OCI-LY7 (cell line): ENCODE measurements at regions of chr1 and their contacts with region 1.

Region 1: GRCh38 chr1:65209005-65209885 is 61.2 kb downstream of the AK4 start:
- DNase-seq: peak; percentile 36
- H3K4me3 ChIP-seq: no peak overlapping the region
- H3K27ac ChIP-seq: no peak overlapping the region
- H3K4me1 ChIP-seq: no peaks in the 10 kb centered on the region
- CTCF ChIP-seq: peak; percentile 80

Region 2: GRCh38 chr1:64983150-64983549 is 226.1 kb before region 1 on chr1:
- CTCF ChIA-PET with region 1: no interaction called
- POLR2A ChIA-PET with region 1: no interaction called
- intact Hi-C with region 1: no loop called
- DNase-seq: no peak
- H3K4me3 ChIP-seq: no peak overlapping the region
- H3K27ac ChIP-seq: no peak overlapping the region
- H3K4me1 ChIP-seq: peaks cover 5% of the 10 kb centered on the region
- CTCF ChIP-seq: no peak

Region 3: GRCh38 chr1:65059930-65060538 is 149.2 kb before region 1 on chr1:
- CTCF ChIA-PET with region 1: no interaction called
- POLR2A ChIA-PET with region 1: interaction called, 3 read pairs
- intact Hi-C with region 1: loop called (anchors 5 kb)
- DNase-seq: peak; percentile 31
- H3K4me3 ChIP-seq: no peak overlapping the region
- H3K27ac ChIP-seq: no peak overlapping the region
- H3K4me1 ChIP-seq: peaks cover 13% of the 10 kb centered on the region
- CTCF ChIP-seq: peak; percentile 74